Panc1 (cell line): ENCODE measurements at regions of chr18 and their contacts with region 1.

Region 1: GRCh38 chr18:22563098-22563707 is 145.5 kb upstream of the CTAGE1 start:
- DNase-seq: peak; percentile 71
- ATAC-seq: peak; percentile 94
- H3K4me3 ChIP-seq: no peak overlapping the region
- H3K27ac ChIP-seq: no peak overlapping the region
- H3K4me1 ChIP-seq: no peaks in the 10 kb centered on the region; the same call in 1 of the 2 replicates
- H3K27me3 ChIP-seq: peaks cover 24% of the 10 kb centered on the region
- CTCF ChIP-seq: peak; percentile 81

Region 2: GRCh38 chr18:21904856-21905255 is 658.3 kb before region 1 on chr18:
- CTCF ChIA-PET with region 1: no interaction called
- POLR2A ChIA-PET with region 1: no interaction called
- in situ Hi-C with region 1: no loop called
- intact Hi-C with region 1: loop called (anchors 10 kb)
- DNase-seq: no peak
- ATAC-seq: no peak
- H3K4me3 ChIP-seq: no peak overlapping the region
- H3K27ac ChIP-seq: no peak overlapping the region
- H3K4me1 ChIP-seq: no peaks in the 10 kb centered on the region
- H3K27me3 ChIP-seq: no peaks in the 10 kb centered on the region
- CTCF ChIP-seq: no peak

Region 3: DNA sequence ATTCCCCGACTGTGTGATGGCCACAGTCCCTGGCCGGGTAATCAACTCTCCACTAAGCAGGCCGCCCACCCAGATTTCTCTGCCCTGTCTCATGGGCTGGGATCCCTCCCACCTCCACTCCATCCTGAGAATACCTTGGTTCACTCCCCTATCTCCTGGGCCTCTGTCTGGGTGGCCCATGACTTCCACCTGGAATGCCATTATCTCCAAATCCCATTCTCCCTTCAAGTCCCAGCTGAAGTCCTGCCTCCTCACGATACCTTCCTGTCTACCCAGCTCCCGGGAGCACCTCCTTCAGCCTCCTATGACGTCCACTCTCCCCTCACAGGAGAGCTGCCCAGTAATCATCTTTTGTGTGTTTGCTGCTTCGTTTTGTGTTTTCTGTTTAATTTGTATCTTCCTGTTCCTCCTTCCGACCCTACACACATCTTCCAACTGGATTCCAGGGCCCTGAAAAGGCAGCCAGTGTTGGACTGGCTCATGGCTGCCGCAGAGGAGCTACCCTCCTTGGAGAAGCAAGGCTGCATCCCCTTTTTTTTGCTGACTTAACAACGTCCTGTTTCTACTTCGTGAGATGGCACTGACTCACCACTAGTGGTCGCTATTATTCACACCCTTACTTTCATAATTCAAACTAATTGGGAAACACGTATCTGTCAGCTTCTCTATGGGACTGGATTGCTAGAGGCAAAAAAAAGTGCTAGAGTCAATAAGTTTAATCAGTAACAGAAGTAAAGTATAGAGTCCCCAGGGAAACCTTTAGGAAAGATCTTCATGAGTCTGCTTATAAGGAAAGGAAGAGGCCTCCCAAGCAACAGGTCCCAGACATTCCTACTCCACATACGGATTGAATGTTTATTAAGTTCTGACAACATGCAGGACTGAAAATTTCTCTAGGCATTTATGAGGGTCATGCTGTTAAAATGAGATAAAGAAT is 565.7 kb before region 1 on chr18:
- CTCF ChIA-PET with region 1: no interaction called
- POLR2A ChIA-PET with region 1: no interaction called
- in situ Hi-C with region 1: no loop called
- intact Hi-C with region 1: no loop called
- DNase-seq: peak; percentile 46
- ATAC-seq: peak; percentile 73
- H3K4me3 ChIP-seq: no peak overlapping the region
- H3K27ac ChIP-seq: no peak overlapping the region
- H3K4me1 ChIP-seq: no peaks in the 10 kb centered on the region
- H3K27me3 ChIP-seq: no peaks in the 10 kb centered on the region
- CTCF ChIP-seq: peak; percentile 90

Region 4: GRCh38 chr18:22170421-22171262 is 392.6 kb before region 1 on chr18:
- CTCF ChIA-PET with region 1: interaction called, 4 read pairs
- POLR2A ChIA-PET with region 1: no interaction called
- in situ Hi-C with region 1: no loop called
- intact Hi-C with region 1: loop called (anchors 5 kb)
- DNase-seq: no peak
- ATAC-seq: peak; percentile 50; the same call in 1 of the 2 replicates
- H3K4me3 ChIP-seq: peak overlapping the region; percentile 50 to 67
- H3K27ac ChIP-seq: no peak overlapping the region
- H3K4me1 ChIP-seq: peaks cover 27% of the 10 kb centered on the region
- H3K27me3 ChIP-seq: peaks cover 49% of the 10 kb centered on the region
- CTCF ChIP-seq: no peak

Region 5: DNA sequence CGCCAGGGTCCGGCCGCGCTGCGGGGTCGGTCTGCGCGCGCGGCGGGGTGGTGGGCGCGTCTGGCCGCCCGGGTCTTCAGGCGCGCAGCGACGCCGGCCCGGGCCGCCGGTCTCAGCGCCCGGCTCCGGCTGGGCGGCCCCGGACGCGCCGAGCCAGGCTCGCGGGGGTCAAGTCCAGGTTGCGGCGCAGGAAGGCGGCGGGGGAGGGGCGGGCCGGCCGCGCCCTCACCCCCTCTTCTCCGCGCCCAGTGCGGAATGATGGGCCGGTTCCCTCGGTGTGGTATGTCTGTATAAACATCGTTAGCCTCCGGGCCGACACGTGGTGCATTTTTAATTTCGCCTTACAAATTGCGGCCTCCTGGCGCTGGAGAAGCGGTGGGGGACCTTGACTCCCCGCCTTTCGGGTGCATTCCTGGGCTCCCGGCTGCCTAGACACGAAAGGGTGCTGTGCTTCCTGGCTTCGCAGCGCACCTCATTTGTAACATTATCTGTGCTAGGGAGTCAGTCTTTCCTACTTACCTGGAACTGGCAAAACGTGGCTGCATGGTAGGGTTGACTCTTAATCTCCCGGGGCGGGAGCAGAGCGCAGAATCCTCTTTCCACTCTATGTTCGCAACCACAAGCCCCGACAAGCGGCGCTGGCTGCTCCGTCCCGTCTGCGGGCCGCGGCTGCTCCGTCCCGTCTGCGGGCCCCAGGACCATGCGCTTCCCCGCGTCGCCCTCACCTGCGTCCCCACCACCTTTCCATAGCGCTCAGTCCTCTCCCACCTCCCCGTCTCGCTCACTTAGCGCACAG is 214.5 kb before region 1 on chr18:
- CTCF ChIA-PET with region 1: no interaction called
- POLR2A ChIA-PET with region 1: no interaction called
- in situ Hi-C with region 1: no loop called
- intact Hi-C with region 1: loop called (anchors 10 kb)
- DNase-seq: no peak
- ATAC-seq: peak; percentile 64
- H3K4me3 ChIP-seq: peak overlapping the region; percentile 11 to 35; a peak in 3 of 4 replicates
- H3K27ac ChIP-seq: no peak overlapping the region
- H3K4me1 ChIP-seq: no peaks in the 10 kb centered on the region
- H3K27me3 ChIP-seq: peaks cover 25% of the 10 kb centered on the region
- CTCF ChIP-seq: no peak

Region 6: DNA sequence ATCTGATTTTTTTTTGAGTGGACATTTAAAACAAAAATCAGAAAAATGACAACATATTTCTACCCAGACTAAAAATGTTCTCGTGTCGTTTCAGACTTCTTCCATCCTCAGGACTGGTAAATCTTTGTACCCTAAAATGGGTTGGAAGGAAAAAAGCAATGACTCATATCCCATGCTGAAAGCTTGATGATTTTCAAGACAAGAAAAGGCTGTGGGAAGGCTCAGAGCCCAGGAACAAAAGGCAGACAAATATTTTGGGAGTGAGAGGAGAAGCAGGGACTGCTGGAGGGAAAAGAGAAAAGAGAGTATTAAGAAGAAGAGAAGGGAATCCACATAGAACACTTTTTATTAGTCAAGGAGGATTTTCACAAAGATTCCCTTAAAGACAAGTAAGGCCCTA is 68.4 kb before region 1 on chr18:
- CTCF ChIA-PET with region 1: no interaction called
- POLR2A ChIA-PET with region 1: no interaction called
- in situ Hi-C with region 1: no loop called
- intact Hi-C with region 1: loop called (anchors 10 kb)
- DNase-seq: no peak
- ATAC-seq: no peak
- H3K4me3 ChIP-seq: no peak overlapping the region
- H3K27ac ChIP-seq: no peak overlapping the region
- H3K4me1 ChIP-seq: no peaks in the 10 kb centered on the region
- H3K27me3 ChIP-seq: no peaks in the 10 kb centered on the region
- CTCF ChIP-seq: no peak

Region 7: DNA sequence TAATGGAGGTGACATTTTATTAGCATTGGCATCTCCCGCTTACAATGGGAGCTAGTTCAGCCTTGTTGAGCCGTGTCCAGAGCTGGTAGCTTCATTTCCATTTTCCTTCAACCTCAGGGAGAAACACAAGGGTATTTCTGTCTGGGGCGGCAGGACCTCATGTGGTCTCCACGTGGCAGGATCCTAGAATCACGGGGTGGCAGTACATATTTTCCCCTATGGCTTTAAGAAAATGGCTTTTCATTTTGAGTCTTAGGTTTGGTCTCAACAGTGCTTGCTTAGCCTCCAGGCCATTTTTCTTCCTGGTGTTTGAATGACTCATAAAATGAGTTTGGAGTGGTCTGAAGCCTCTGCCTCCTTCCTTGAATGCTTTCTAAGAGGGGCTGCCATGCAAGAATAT is 592.3 kb after region 1 on chr18:
- CTCF ChIA-PET with region 1: no interaction called
- POLR2A ChIA-PET with region 1: no interaction called
- in situ Hi-C with region 1: no loop called
- intact Hi-C with region 1: no loop called
- DNase-seq: no peak
- ATAC-seq: peak; percentile 63
- H3K4me3 ChIP-seq: 0 out of 4 replicates have a peak overlapping the region, but pooled peaks of 1 of the 2 experiments have one; percentile 12
- H3K27ac ChIP-seq: peak overlapping the region; percentile 18
- H3K4me1 ChIP-seq: peaks cover 33% of the 10 kb centered on the region
- H3K27me3 ChIP-seq: no peaks in the 10 kb centered on the region
- CTCF ChIP-seq: no peak